ENCODE measurements at regions of chr18 and their contacts with region 1.

Region 1: DNA sequence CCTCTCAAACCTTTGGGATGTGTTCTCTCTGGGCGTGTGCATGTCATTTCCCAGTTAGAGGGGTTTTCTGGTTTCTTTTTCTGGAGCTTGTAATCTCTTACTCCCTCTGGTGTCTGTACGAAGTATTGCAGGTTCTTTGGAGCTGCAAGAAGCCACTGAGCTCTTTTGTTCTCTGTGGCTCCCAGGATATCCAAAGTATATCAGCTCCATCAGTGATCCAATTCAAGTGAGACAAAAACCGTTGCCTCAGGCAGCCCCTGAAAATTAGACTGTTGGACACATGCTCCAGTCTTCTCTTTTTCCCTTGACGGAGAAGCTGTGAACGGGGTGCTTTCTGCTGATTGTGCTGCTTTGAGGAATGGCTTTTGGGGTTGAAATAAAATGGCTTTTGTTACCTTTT is 59.0 kb upstream of the LDLRAD4 start:
- DNase-seq: peak; percentile 73
- ATAC-seq: peak; percentile 90
- H3K4me3 ChIP-seq: no peak overlapping the region
- H3K27ac ChIP-seq: no peak overlapping the region
- H3K4me1 ChIP-seq: peaks cover 4% of the 10 kb centered on the region; the same call in 1 of the 2 replicates
- H3K27me3 ChIP-seq: no peaks in the 10 kb centered on the region
- CTCF ChIP-seq: peak; percentile 76
- POLR2A ChIP-seq: no peak
- RAD21 ChIP-seq: peak; percentile 70

Region 2: DNA sequence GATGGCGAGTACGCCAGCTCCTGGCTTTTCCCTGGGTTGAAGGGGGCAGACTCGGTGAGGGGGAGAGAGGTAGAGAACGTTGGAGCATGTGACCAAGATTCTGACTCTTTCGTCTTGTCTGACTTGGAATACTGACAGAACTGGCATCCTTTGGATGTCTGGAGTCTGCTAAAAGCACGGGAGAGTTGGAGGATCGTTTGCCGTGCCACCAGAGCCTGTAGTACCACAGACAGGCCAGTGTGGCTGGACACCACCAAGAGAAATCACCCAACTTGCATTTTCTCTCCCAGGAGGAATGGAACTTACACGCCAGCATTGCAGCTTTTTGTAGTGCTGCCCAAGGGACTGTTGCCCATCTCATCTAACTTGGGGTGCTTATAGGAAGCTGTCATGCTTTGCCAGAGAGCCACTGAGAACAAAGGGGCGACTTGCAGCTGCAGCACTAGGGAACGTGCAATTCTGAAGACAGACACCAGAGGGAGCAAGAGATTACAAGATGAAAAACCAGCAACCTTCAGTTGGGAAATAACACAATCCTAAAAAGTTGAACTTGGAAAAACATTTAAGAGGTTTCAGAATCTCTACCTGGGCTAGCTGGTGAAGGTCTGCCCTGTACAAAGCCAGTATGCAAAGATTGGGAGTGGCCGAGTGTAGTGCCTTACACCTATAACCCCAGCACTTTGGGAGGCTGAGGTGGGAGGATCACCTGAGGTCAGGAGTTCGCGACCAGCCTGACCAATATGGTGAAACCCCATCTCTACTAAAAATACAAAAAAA is 432.6 kb before region 1 on chr18:
- CTCF ChIA-PET with region 1: interaction called, 4 read pairs
- POLR2A ChIA-PET with region 1: no interaction called
- dilution Hi-C with region 1: no loop called
- in situ Hi-C with region 1: loop called (anchors 25 kb)
- intact Hi-C with region 1: loop called (anchors 1 kb)
- DNase-seq: peak; percentile 74
- ATAC-seq: peak; percentile 80
- H3K4me3 ChIP-seq: no peak overlapping the region
- H3K27ac ChIP-seq: no peak overlapping the region
- H3K4me1 ChIP-seq: no peaks in the 10 kb centered on the region; the same call in 1 of the 2 replicates
- H3K27me3 ChIP-seq: no peaks in the 10 kb centered on the region
- CTCF ChIP-seq: peak; percentile 89
- POLR2A ChIP-seq: no peak
- RAD21 ChIP-seq: peak; percentile 92

Region 3: GRCh38 chr18:12947355-12948041 is 212.1 kb before region 1 on chr18 and contains the start of gene SEH1L:
- CTCF ChIA-PET with region 1: no interaction called
- POLR2A ChIA-PET with region 1: no interaction called
- dilution Hi-C with region 1: no loop called
- in situ Hi-C with region 1: no loop called
- intact Hi-C with region 1: loop called (anchors 10 kb)
- DNase-seq: peak; percentile 98
- ATAC-seq: peak; percentile 93
- H3K4me3 ChIP-seq: peak within 1 kb of the TSS; percentile 88
- H3K27ac ChIP-seq: peak within 1 kb of the TSS; percentile 93
- H3K4me1 ChIP-seq: peaks cover 3% of the 10 kb centered on the region; the same call in 1 of the 2 replicates
- H3K27me3 ChIP-seq: no peaks in the 10 kb centered on the region
- CTCF ChIP-seq: no peak
- POLR2A ChIP-seq: peak; percentile 34; the same call in 1 of the 2 replicates
- RAD21 ChIP-seq: no peak
- total RNA-seq, gene SEH1L: 43.0 and 45.5 TPM in 2 replicates

Region 4: DNA sequence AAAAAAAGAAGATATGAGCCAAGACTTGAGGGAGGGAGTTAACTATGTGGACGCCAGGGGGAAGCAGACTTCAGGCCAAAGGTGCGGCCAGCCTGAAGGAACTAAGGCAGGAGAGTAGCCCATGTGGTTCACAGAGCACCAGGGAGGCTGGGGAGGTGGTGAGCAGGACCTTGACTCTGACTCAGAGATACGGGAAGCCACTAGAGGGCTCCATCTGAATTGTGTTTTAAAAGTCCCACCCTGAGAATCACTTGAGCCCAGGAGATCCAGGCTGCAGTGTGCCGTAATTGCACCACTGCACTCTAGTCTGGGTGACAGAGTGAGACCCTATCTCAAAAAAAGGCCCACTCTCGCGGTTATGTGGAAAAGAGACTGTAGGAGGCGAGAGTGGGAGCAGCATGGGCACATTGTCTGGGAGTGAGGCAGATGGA is 156.1 kb before region 1 on chr18:
- CTCF ChIA-PET with region 1: interaction called, 8 read pairs
- POLR2A ChIA-PET with region 1: no interaction called
- dilution Hi-C with region 1: no loop called
- in situ Hi-C with region 1: no loop called
- intact Hi-C with region 1: loop called (anchors 1 kb)
- DNase-seq: peak; percentile 80
- ATAC-seq: peak; percentile 98
- H3K4me3 ChIP-seq: no peak overlapping the region
- H3K27ac ChIP-seq: no peak overlapping the region
- H3K4me1 ChIP-seq: no peaks in the 10 kb centered on the region
- H3K27me3 ChIP-seq: no peaks in the 10 kb centered on the region
- CTCF ChIP-seq: peak; percentile 55
- POLR2A ChIP-seq: no peak
- RAD21 ChIP-seq: peak; percentile 47

Region 5: DNA sequence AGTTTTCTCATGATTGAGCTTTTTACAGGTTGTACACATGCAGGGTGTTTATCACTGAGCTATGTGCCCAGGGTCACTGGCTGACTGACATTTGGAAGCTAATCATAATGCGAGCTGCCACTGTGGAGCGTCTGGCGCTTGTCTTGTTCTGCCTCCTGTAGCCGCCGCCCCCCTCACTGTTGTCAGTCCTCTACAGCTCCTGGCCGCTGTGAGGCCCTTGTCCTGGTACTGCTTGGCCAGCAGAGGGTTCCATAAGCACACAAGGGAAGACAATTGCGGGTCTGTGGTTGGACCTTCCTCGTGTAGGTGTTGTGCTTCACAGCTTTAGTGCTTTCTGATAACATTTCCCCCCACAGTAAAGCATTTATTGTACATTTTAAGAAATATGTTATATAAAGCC is 46.6 kb before region 1 on chr18:
- CTCF ChIA-PET with region 1: interaction called, 8 read pairs
- POLR2A ChIA-PET with region 1: no interaction called
- dilution Hi-C with region 1: no loop called
- in situ Hi-C with region 1: no loop called
- intact Hi-C with region 1: loop called (anchors 1 kb)
- DNase-seq: peak; percentile 51
- ATAC-seq: peak; percentile 96
- H3K4me3 ChIP-seq: no peak overlapping the region
- H3K27ac ChIP-seq: no peak overlapping the region
- H3K4me1 ChIP-seq: no peaks in the 10 kb centered on the region
- H3K27me3 ChIP-seq: no peaks in the 10 kb centered on the region
- CTCF ChIP-seq: peak; percentile 46
- POLR2A ChIP-seq: no peak
- RAD21 ChIP-seq: peak; percentile 45

Region 6: GRCh38 chr18:13175754-13176210 is 16.2 kb after region 1 on chr18:
- CTCF ChIA-PET with region 1: interaction called, 5 read pairs
- POLR2A ChIA-PET with region 1: interaction called, 22 read pairs
- dilution Hi-C with region 1: no loop called
- in situ Hi-C with region 1: no loop called
- intact Hi-C with region 1: no loop called
- DNase-seq: no peak
- ATAC-seq: no peak
- H3K4me3 ChIP-seq: no peak overlapping the region
- H3K27ac ChIP-seq: no peak overlapping the region
- H3K4me1 ChIP-seq: no peaks in the 10 kb centered on the region
- H3K27me3 ChIP-seq: peaks cover 12% of the 10 kb centered on the region
- CTCF ChIP-seq: no peak
- POLR2A ChIP-seq: no peak
- RAD21 ChIP-seq: no peak